Posterior vena cava (tissue), 2 donors: ENCODE measurements at regions of chr14 and their contacts with region 1.

Region 1: DNA sequence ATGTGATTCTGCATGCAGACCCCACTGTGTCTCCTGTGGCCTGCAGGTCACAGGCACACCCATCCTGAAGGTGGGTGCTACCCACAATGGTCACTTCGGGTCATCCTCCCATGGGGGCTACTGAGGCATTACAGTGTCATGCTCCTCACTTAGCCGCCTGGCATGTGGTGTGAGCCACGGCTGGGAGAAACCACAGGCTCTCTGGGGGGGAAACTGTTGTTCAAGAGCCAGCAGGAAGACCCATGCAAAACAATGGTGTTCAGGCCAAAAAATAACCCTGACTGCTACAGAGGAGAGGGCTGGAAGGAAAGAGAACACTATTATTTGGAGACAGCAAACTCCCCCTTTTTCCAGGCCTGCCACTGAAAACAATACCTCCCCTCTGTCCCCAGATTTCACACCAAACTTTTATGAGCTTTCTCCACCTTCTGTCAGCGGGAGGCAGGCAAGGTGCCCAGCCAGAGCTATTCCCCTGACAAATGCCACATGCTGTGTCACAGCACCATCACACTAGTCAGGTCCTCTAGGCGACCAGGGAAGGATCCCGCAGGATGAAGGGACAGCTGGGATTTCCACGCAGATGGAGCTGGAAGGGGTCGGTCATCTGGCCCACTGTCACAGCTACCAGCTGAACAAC is 83.7 kb downstream of the CHGA start:
- DNase-seq: no peak

Region 2: DNA sequence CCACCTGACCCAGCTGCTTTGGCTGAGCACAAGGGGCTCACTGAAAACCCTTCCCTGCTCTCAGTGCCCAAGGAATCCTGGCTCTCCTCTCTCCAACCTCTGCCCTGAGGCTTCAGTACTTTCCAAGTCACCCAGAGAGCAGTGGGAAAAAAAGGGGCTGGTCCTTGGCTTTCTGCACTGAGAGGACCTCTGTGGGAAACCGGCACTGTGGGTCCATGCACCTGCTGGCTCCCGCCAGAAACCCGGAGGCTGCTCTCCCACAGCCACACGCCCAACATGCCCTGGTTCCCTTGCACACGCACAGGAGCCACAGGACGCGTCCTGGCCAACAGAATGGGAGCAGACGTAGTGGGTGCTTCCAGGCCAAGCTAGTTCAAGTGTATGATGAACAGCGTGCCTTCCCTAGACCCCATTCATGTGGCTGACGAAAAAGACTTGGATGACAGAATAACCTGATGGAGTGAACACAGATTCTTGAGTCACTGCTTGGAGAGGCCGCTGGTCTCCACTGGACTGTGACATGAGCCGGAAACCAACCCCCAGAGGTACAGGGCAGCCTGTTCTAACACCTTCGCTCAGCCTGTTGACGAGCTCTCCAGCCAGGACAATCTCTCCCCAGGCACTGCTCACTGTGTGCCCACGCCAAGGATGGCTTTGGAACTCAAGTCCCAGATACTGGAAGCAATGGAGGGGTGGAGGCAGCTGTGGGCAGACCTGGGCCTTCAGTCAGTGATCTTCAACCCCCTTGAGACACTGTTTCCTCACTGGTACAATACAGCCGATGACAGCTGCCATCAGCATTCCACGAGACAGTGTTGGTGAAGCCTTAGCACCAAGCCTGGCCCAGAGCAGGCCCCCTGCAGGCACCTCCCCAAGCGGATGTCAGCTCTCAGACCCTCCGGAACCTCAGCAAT is 21.5 kb after region 1 on chr14:
- intact Hi-C with region 1: loop called in 1 of 2 experiments (anchors 1 kb)
- DNase-seq: no peak

Region 3: DNA sequence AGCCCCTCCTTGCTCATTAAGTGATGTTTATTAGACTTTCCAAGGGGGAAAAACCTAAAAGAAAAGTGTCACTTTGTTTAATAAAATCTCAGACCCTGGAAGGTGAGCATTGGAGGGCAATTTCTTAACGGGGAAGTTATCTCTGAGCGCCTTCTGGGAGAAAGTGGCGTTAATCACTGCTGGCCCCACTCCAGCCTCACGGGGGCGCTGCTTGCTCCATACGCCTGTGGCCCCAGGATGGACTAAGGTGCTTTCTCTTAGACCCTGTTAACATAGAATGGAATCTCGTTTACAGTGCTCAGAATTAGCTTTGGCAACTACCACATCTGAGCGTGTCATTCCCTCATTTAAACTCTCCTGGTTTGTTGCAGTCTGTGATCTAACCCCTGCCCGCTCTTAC is 798.0 kb after region 1 on chr14:
- intact Hi-C with region 1: no loop called
- DNase-seq: no peak